IMR-90 (cell line): ENCODE measurements at regions of chr2 and their contacts with region 1.

Region 1: GRCh38 chr2:174039551-174040416 is 74.6 kb upstream of the SP3 start:
- DNase-seq: peak; percentile 97
- ATAC-seq: peak; percentile 94
- H3K4me3 ChIP-seq: no peak overlapping the region
- H3K27ac ChIP-seq: peak overlapping the region; percentile 82
- H3K4me1 ChIP-seq: peaks cover 6% of the 10 kb centered on the region
- H3K27me3 ChIP-seq: no peaks in the 10 kb centered on the region
- CTCF ChIP-seq: peak; percentile 93
- POLR2A ChIP-seq: no peak
- RAD21 ChIP-seq: peak; percentile 91

Region 2: DNA sequence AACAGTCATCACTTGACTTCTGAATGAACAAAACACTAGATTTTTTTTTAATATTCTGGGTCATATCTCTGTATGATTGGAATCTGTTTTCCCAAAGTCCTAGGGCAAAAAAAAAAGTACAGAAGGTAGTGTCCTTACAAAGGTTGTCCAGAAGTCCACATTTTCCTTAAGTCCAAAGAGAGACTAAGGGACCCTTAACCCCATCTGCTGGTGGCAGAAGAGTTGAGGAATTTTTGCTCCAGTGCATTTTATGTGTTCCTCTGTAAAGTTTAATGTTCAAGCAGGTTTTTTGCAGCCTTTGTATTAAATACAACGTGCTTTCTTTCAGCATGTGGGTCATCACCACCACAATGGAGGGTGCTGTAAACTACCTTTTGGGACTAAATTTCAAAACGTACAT is 290.5 kb before region 1 on chr2:
- CTCF ChIA-PET with region 1: no interaction called
- POLR2A ChIA-PET with region 1: no interaction called
- dilution Hi-C with region 1: no loop called
- in situ Hi-C with region 1: no loop called
- intact Hi-C with region 1: loop called (anchors 10 kb)
- DNase-seq: peak; percentile 54
- ATAC-seq: peak; percentile 46; the same call in 1 of the 2 replicates
- H3K4me3 ChIP-seq: no peak overlapping the region
- H3K27ac ChIP-seq: no peak overlapping the region
- H3K4me1 ChIP-seq: no peaks in the 10 kb centered on the region
- H3K27me3 ChIP-seq: peaks cover 2% of the 10 kb centered on the region; the same call in 1 of the 2 replicates
- CTCF ChIP-seq: peak; percentile 49
- POLR2A ChIP-seq: no peak
- RAD21 ChIP-seq: peak; percentile 58